Breast epithelium (tissue), 4 donors: ENCODE measurements at regions of chrX and their contacts with region 1.

Region 1: GRCh38 chrX:118666548-118666947 is 60.9 kb upstream of the IL13RA1 start:
- DNase-seq: no peak
- H3K4me3 ChIP-seq: no peak overlapping the region
- H3K27ac ChIP-seq: no peak overlapping the region
- H3K4me1 ChIP-seq: no peaks in the 10 kb centered on the region
- H3K27me3 ChIP-seq: peaks cover 0 to 7% of the 10 kb centered on the region in 2 donors
- CTCF ChIP-seq: no peak
- POLR2A ChIP-seq: no peak

Region 2: GRCh38 chrX:119624951-119625668 is 958.6 kb after region 1 on chrX:
- intact Hi-C with region 1: loop called (anchors 5 kb)
- DNase-seq: no peak
- H3K4me3 ChIP-seq: no peak overlapping the region
- H3K27ac ChIP-seq: no peak overlapping the region
- H3K4me1 ChIP-seq: no peaks in the 10 kb centered on the region
- H3K27me3 ChIP-seq: no peaks in the 10 kb centered on the region
- CTCF ChIP-seq: no peak
- POLR2A ChIP-seq: no peak